ENCODE measurements at regions of chr1 and their contacts with region 1.

Region 1: GRCh38 chr1:47569681-47570470 is 132.0 kb downstream of the FOXD2 start:
- DNase-seq: peak; percentile 66 to 83
- H3K4me3 ChIP-seq: no peak overlapping the region
- H3K27ac ChIP-seq: peak overlapping the region; percentile 5 to 49
- H3K4me1 ChIP-seq: peaks cover 0 to 20% (median 8%) of the 10 kb centered on the region in 4 donors
- H3K27me3 ChIP-seq: no peaks in the 10 kb centered on the region
- CTCF ChIP-seq: peak; percentile 66

Region 2: DNA sequence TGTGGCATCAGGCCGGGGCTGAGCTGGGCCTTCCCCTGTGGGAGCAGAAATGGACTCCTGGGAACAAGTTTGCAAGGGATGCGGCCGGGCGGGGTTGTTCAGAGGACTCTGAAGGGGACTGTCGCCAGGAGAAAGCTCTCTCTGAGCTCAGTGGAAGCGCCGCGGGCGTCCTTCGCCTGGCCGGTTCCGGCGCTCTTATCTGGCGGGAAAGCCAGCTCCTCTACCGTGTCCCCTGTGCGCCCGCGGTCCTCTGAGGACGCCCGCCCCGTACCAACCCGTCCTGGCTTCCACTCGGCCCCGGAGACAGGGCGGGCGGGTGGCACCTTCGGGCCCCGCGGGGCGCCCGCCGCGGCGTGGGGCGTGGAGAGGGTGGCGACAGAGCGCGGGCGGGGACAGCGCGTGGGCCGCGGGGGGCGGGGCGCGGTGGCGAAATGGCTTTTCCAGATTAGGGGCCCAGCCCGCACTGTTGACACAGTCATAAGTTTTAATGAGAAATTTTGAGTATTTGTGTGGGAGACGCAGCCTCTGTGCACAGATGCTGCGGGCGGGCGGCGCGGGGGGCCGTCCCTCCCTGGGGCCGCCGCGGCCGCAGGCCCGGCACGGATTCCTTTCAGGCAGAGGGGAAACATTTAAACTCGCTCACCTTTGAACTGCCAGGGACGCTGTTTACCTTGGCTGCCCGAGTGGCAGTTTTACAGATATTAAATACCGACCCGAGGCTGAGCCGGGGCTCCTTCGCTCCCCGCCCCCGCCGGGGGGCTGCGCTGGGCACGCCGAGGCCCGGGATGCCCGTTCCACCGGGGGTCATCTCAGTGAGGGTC is 61.8 kb before region 1 on chr1:
- intact Hi-C with region 1: loop called (anchors 5 kb)
- DNase-seq: peak; percentile 26 to 80
- H3K4me3 ChIP-seq: peak overlapping the region; percentile 54 to 65
- H3K27ac ChIP-seq: peak overlapping the region; percentile 78 to 86
- H3K4me1 ChIP-seq: peaks cover 0 to 19% (median 13%) of the 10 kb centered on the region in 4 donors
- H3K27me3 ChIP-seq: no peaks in the 10 kb centered on the region
- CTCF ChIP-seq: no peak

Region 3: DNA sequence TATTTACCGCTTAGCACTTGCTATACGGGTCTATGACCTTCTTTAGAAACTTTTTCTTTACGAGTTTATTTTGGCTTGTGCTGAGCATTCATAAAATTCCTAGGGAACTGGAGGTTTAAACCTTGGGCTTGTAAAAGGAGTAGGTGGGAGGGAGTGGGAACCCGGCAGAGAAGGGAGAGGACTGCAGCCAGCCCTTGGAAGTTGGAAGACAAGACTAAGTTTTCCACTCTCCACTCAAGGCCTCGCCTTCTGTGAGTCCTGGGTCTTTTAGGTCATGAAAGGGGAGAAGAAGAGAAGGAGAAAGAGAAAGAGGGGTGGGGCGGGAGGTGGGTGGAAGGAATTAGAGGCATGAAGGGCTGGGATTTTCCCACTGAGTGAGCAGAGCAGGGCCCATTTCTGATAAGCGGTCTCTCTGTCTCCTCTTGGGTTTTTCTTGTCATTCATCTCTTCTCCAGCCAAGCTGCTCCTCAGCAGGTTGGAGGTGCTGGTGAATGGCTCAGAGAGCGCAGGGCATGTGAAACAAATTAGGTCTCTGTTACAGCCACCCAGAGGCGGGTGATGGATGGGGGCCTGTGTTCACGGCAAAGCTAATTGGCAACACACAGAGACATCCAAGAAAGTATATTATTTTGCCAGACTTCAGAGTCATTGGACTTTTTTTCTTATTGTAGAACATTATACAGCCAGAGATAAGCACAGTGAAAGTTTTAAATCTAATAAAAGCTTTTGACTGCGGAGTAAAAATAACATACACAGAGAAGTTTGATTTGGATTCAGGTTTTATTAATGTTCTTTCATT is 115.3 kb after region 1 on chr1:
- intact Hi-C with region 1: loop called (anchors 10 kb)
- DNase-seq: peak; percentile 47 to 80
- H3K4me3 ChIP-seq: peak overlapping the region in 1 of 2 donors; percentile 19
- H3K27ac ChIP-seq: peak overlapping the region; percentile 84 to 85
- H3K4me1 ChIP-seq: peaks cover 0 to 40% (median 21%) of the 10 kb centered on the region in 4 donors
- H3K27me3 ChIP-seq: no peaks in the 10 kb centered on the region
- CTCF ChIP-seq: no peak